Cardiac septum (tissue), 1 donor: ENCODE measurements at regions of chr12 and their contacts with region 1.

Region 1: DNA sequence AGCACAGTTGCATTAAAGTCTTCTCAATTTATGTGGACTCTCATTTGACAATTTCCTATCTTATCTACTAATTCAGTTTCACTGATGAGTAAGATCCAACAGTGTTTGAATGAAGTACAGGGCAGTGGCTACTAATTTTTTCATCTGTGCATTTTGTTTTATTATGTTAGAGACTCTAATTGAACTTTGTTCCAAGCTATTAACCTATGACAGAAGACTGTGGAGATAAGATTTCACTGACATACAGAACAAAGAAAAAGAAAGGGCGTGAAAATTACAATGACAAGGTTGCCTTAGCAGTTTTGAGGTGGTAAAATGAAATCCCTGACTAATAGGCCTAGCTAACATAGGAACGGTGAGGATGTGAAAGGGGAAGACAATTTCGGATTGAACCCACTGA is 153.2 kb upstream of the SOX5 start:
- DNase-seq: no peak

Region 2: GRCh38 chr12:24302708-24303107 is 200.0 kb after region 1 on chr12:
- intact Hi-C with region 1: loop called (anchors 5 kb)
- DNase-seq: no peak